A673 (cell line): ENCODE measurements at regions of chr6 and their contacts with region 1.

Region 1: GRCh38 chr6:81241126-81242041 is 511.1 kb downstream of the TENT5A start:
- DNase-seq: peak; percentile 73
- H3K4me3 ChIP-seq: no peak overlapping the region
- H3K27ac ChIP-seq: no peak overlapping the region
- H3K4me1 ChIP-seq: no peaks in the 10 kb centered on the region
- H3K27me3 ChIP-seq: no peaks in the 10 kb centered on the region
- CTCF ChIP-seq: peak; percentile 67

Region 2: DNA sequence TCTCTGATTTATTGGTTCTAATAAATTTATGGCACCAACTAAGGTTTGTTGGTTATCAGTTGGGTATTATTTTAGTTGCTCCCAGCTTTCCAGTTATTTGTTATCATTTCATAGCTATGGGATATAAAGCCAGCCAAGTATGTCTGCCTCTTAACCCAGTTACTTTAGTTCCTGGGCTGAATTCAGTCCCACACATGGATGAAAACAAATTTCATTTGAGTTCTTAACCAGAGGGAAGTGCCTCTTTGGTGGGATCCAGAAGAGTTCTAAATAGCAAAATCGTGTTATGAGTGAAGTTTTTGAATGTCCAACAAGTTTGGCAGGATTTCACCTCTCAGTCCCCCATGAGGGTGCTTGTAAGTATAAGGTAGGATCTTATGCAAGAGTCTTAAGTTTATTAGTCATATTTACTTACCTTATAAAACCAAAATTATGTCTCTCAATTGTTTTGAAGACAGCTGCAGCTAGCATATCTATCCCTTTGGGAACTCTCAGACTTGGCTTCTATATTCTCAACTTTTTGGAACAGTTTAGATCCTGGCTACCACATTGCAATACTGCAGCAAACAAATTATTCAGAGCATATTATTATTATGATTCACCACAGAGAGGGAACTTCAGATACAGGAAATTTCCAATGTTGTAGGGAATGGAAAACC is 451.3 kb before region 1 on chr6:
- CTCF ChIA-PET with region 1: no interaction called
- POLR2A ChIA-PET with region 1: no interaction called
- intact Hi-C with region 1: no loop called
- DNase-seq: no peak
- H3K4me3 ChIP-seq: no peak overlapping the region
- H3K27ac ChIP-seq: no peak overlapping the region
- H3K4me1 ChIP-seq: no peaks in the 10 kb centered on the region
- H3K27me3 ChIP-seq: no peaks in the 10 kb centered on the region
- CTCF ChIP-seq: no peak

Region 3: DNA sequence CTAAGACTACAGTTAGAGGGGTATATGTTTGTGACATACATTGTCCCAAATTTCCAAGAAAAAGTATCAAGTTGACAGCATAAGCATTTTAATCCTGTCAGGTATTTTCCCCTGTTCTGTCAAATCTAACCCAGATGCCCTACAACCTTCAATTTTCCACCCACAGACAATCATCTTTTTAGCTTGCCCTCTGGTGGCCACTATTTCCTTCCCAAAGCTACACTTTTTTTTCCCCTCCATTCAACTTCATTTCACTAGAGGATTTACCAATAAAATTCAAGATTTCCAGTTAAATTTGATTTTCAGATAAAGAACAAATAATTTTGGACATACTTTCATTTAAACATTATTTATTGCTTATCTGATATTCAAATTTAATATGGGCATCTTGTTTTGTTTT is 224.5 kb after region 1 on chr6:
- CTCF ChIA-PET with region 1: no interaction called
- POLR2A ChIA-PET with region 1: no interaction called
- intact Hi-C with region 1: loop called (anchors 5 kb)
- DNase-seq: peak; percentile 62
- H3K4me3 ChIP-seq: no peak overlapping the region
- H3K27ac ChIP-seq: no peak overlapping the region
- H3K4me1 ChIP-seq: no peaks in the 10 kb centered on the region
- H3K27me3 ChIP-seq: no peaks in the 10 kb centered on the region
- CTCF ChIP-seq: peak; percentile 77